ENCODE measurements at regions of chr12 and their contacts with region 1.

Region 1: DNA sequence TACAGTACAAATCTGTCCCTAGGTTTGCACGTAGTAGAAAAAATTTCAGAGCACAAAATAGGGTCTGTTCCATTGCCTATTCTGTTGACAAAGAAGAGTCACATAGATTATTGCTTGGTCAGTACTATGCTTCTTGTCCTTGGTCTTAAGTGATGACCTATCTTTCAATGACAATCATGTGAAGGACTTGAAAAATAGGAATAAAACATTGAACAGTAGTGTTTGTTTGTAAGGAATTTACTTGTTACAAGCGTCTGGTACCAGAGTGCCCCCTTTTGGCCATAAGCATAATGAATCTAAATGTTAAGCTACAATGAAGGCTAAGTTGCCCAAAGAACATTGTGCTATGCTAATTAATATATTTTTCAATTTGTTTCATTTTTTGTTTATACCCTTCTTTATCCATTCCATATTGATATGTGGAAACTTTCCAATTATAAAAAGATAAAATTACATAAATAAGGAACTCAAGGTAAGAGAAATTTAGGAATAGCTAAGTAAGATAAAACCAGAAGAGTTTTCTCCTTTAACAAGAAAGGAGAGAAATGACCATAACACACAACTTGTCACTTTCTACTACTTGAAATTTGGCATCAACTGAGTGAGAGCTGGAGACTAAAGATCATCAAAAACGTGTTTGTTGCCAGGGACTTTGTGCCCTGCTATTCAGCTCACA is 204.7 kb downstream of the EPS8 start:
- DNase-seq: peak; percentile 53
- ATAC-seq: peak; percentile 64
- H3K4me3 Mint-ChIP-seq: no peak overlapping the region
- H3K27ac Mint-ChIP-seq: no peak overlapping the region
- H3K4me1 Mint-ChIP-seq: peaks cover 13% of the 10 kb centered on the region
- H3K27me3 Mint-ChIP-seq: no peaks in the 10 kb centered on the region

Region 2: DNA sequence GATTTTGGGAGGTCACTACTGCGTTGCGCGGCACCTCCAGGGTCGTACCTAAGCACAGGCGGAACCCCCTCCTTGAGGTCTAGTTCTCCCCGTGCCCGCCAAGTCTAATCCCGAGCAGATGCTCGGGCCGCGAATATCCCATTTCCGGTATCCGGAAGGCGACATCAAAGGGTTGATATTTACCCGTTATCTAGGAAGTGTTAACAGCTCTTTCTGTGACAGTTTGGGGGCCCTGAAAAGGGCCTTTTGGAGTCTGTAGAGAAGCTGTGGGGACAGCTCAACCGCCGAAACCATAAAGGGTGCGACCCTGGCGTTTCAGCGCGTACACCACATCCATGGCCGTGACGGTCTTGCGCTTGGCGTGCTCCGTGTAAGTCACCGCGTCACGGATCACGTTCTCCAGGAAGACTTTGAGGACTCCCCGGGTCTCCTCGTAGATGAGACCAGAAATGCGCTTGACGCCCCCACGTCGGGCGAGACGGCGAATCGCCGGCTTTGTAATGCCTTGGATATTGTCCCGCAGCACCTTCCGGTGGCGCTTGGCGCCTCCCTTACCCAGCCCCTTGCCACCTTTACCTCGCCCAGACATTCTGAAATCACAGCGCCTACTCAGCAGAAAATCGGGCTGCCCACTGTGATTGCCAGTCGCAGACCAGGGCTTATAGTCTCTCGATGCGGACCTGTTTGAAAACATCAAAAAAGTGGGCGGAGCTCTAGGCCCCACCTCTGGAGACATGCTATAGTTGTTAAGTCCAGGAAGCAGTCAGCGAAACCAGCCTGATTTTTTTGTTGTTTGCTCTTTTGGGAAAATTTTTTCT is 813.8 kb before region 1 on chr12:
- CTCF ChIA-PET with region 1: no interaction called
- POLR2A ChIA-PET with region 1: no interaction called
- intact Hi-C with region 1: no loop called
- DNase-seq: peak; percentile 96
- ATAC-seq: peak; percentile 35
- H3K4me3 Mint-ChIP-seq: peak overlapping the region; percentile 97
- H3K27ac Mint-ChIP-seq: peak overlapping the region; percentile 99
- H3K4me1 Mint-ChIP-seq: peaks cover 40% of the 10 kb centered on the region
- H3K27me3 Mint-ChIP-seq: no peaks in the 10 kb centered on the region

Region 3: DNA sequence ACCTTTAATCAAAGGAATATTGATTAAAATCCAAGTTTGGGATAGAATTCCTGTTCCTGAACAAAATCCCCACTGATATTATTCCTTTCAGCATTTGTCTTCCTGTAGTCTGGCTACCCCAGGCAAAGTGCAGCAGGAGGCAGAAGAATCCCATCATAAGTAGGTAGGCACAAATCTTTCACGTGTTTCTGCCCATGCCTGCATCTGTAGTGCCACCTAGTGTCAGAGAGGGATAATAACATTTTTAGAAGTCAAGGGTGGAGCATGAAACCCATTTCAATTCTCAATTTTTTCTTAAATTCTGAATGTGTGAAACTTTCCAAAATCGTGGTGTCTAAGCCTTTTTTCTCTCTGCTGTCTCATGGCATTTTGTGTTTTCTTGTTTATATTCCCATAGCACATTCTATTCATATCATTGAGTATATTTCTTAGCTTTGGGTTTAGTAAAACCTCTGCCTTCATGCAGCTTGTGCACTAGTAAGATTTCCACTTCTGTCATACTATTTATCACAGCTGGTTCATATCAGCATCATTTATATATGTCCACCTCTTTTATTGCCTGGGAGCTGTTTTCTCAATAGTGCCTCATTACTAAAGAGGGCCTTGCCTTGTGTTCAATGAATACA is 315.5 kb before region 1 on chr12:
- CTCF ChIA-PET with region 1: interaction called, 10 read pairs
- POLR2A ChIA-PET with region 1: no interaction called
- intact Hi-C with region 1: no loop called
- DNase-seq: peak; percentile 56
- ATAC-seq: peak; percentile 71
- H3K4me3 Mint-ChIP-seq: no peak overlapping the region
- H3K27ac Mint-ChIP-seq: no peak overlapping the region
- H3K4me1 Mint-ChIP-seq: no peaks in the 10 kb centered on the region
- H3K27me3 Mint-ChIP-seq: peaks cover 2% of the 10 kb centered on the region

Region 4: DNA sequence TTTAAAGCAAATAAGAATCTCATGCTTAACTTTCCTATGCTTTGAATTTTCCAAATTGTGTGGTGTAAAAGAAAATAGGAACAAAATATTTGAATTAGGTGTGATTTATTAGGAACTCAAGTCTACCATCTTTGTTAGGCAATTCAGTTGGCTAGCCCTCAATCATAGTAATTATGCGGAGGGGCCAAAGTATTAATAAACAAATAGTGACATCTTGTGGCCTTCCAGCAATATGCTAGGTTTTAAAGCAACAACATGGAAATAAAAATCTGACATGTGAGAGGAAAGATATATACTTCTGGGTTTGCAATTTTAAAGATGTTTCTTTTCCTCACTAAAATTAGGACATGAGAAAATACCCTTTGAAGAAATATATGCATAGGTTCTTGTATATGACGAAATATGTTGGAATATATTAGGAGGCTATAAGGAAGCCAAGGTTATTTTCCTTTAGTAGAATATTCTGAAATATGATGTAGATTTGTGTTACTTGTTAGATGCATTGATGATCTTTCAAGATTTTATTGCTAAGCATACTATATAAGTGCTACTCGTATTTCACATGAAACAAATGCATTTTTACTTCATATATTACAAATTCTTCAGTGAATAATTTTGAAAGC is 61.8 kb before region 1 on chr12:
- CTCF ChIA-PET with region 1: interaction called, 345 read pairs
- POLR2A ChIA-PET with region 1: no interaction called
- intact Hi-C with region 1: no loop called
- DNase-seq: no peak
- ATAC-seq: no peak
- H3K4me3 Mint-ChIP-seq: no peak overlapping the region
- H3K27ac Mint-ChIP-seq: no peak overlapping the region
- H3K4me1 Mint-ChIP-seq: peaks cover 8% of the 10 kb centered on the region
- H3K27me3 Mint-ChIP-seq: peaks cover 20% of the 10 kb centered on the region

Region 5: GRCh38 chr12:15540469-15540872 is 44.0 kb before region 1 on chr12:
- CTCF ChIA-PET with region 1: interaction called, 345 read pairs
- POLR2A ChIA-PET with region 1: no interaction called
- intact Hi-C with region 1: no loop called
- DNase-seq: no peak
- ATAC-seq: no peak
- H3K4me3 Mint-ChIP-seq: no peak overlapping the region
- H3K27ac Mint-ChIP-seq: no peak overlapping the region
- H3K4me1 Mint-ChIP-seq: peaks cover 35% of the 10 kb centered on the region
- H3K27me3 Mint-ChIP-seq: no peaks in the 10 kb centered on the region

Region 6: DNA sequence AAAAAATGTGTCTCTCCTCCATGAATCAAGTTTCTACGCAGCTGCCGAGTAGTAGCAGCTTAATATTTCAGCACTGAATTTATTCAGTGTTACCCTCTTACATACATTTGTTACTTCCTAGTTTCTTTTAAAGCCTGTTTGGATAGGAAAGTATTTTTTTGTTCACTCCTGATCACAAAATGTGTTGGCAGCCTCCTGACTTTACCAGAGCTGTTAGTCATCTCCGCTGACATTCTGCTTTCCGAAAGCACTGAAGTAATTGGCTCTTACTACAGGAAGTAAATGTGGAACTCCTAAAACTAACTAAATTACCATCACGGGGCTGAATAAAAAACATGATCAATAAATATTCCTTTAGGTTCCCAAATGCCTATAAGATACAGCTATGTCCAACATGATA is 20.8 kb before region 1 on chr12:
- CTCF ChIA-PET with region 1: interaction called, 27 read pairs
- POLR2A ChIA-PET with region 1: no interaction called
- intact Hi-C with region 1: no loop called
- DNase-seq: peak; percentile 53
- ATAC-seq: peak; percentile 79
- H3K4me3 Mint-ChIP-seq: peak overlapping the region; percentile 55
- H3K27ac Mint-ChIP-seq: peak overlapping the region; percentile 94
- H3K4me1 Mint-ChIP-seq: peaks cover 67% of the 10 kb centered on the region
- H3K27me3 Mint-ChIP-seq: no peaks in the 10 kb centered on the region

Measured in activated CD4-positive, alpha-beta T cell treated with anti-CD3 and anti-CD28 coated beads for 36 hours (primary cell).